Caco-2 (cell line): ENCODE measurements at regions of chr10 and their contacts with region 1.

Region 1: DNA sequence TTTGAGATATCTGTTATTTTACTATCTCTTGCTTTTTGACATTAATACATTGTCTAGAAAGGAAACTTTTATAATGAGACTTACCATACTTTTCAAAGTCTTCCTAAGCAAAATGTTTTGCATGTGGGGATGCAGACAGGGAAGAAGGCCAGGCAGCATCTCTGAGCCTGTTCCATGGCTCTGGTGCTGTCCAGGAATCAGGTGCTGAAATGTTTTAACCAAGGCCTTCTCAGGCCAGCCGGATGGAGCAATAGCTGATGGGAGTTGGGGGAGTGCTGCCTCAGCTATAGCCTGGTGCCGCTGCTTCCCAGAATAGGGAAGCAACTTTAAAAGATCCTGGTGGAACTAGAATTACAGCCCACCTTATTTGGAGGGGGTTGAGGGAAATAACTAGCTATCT is 38.5 kb downstream of the CRTAC1 start:
- DNase-seq: peak; percentile 41 to 62
- H3K4me3 ChIP-seq: no peak overlapping the region
- H3K4me3 Mint-ChIP-seq: no peak overlapping the region
- H3K27ac Mint-ChIP-seq: no peak overlapping the region
- H3K4me1 ChIP-seq: no peaks in the 10 kb centered on the region
- H3K4me1 Mint-ChIP-seq: no peaks in the 10 kb centered on the region
- H3K27me3 ChIP-seq: no peaks in the 10 kb centered on the region
- H3K27me3 Mint-ChIP-seq: peaks cover 15% of the 10 kb centered on the region
- CTCF ChIP-seq: no peak

Region 2: GRCh38 chr10:96411716-96412320 is 1580.1 kb before region 1 on chr10:
- CTCF ChIA-PET with region 1: interaction called, 13 read pairs
- POLR2A ChIA-PET with region 1: no interaction called
- intact Hi-C with region 1: no loop called
- DNase-seq: no peak
- H3K4me3 ChIP-seq: no peak overlapping the region
- H3K4me3 Mint-ChIP-seq: no peak overlapping the region
- H3K27ac Mint-ChIP-seq: no peak overlapping the region
- H3K4me1 ChIP-seq: no peaks in the 10 kb centered on the region
- H3K4me1 Mint-ChIP-seq: no peaks in the 10 kb centered on the region
- H3K27me3 ChIP-seq: no peaks in the 10 kb centered on the region
- H3K27me3 Mint-ChIP-seq: peaks cover 16% of the 10 kb centered on the region
- CTCF ChIP-seq: no peak

Region 3: GRCh38 chr10:97882142-97883091 is 109.5 kb before region 1 on chr10:
- CTCF ChIA-PET with region 1: no interaction called
- POLR2A ChIA-PET with region 1: no interaction called
- intact Hi-C with region 1: no loop called
- DNase-seq: no peak
- H3K4me3 ChIP-seq: no peak overlapping the region
- H3K4me3 Mint-ChIP-seq: no peak overlapping the region
- H3K27ac Mint-ChIP-seq: no peak overlapping the region
- H3K4me1 ChIP-seq: no peaks in the 10 kb centered on the region
- H3K4me1 Mint-ChIP-seq: no peaks in the 10 kb centered on the region
- H3K27me3 ChIP-seq: no peaks in the 10 kb centered on the region
- H3K27me3 Mint-ChIP-seq: peaks cover 6% of the 10 kb centered on the region
- CTCF ChIP-seq: no peak